Left ventricle myocardium superior (tissue), 1 donor: ENCODE measurements at regions of chr19 and their contacts with region 1.

Region 1: DNA sequence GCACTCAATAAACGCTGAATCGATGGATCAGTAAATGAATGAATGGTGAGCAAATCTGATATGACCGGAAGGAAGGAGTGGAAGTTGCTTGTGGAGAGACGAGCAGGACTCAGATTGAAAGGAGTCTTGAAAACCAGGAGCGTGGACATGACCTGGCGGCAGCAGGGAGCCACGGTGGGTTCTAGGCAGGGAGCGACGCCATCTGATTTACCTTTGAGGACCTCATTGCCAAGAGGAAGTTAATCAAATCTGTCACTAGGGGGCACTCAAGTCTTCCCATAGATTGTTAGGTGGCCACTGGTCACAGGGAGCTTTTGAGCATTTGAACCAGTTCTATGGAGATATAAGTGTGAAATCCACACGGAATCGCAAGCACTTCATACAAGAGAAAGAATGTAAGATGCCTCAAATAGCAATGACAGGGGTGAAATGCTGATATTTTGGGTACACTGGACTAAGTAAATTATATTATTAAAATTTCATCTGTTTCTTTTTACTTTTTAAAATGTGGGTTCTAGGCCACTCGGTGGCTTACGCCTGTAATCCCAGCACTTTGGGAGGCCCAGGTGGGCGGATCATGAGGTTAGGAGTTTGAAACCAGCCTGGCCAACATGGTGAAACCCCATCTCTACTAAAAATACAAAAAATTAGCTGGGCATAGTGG is 9.2 kb upstream of the FBN3 start:
- DNase-seq: no peak
- ATAC-seq: peak; percentile 66

Region 2: GRCh38 chr19:8108560-8109445 is 49.7 kb before region 1 on chr19:
- intact Hi-C with region 1: no loop called
- DNase-seq: no peak
- ATAC-seq: no peak

Region 3: DNA sequence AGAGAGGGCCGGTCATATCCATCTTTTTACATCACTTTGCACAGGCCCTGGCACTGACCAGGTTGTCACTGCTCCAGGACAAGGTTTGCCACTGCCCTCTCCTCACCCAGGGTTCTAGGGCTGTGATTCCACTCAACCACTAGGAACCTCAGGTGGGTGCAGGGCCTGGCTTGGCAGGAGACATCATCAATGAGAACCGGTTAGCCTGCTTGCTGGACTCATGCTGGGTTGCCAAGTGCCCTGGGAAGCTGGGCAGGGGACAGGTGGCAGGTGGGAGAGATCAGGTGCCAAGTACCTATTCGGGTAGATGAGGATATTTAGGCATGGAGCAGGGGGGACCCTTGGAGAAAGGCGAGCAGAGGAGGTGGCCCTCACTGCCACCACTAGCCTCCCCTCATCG is 46.4 kb after region 1 on chr19:
- intact Hi-C with region 1: no loop called
- DNase-seq: no peak
- ATAC-seq: no peak

Region 4: GRCh38 chr19:8252922-8253589 is 94.5 kb after region 1 on chr19:
- intact Hi-C with region 1: loop called (anchors 2 kb)
- DNase-seq: peak; percentile 90
- ATAC-seq: peak; percentile 47